ENCODE measurements at regions of chr2 and their contacts with region 1.

Region 1: GRCh38 chr2:86480105-86480504 is 38.9 kb downstream of the KDM3A start:
- DNase-seq: no peak
- H3K4me3 ChIP-seq: peak overlapping the region in 1 of 2 donors; percentile 22
- H3K27ac ChIP-seq: peak overlapping the region; percentile 21 to 76
- H3K4me1 ChIP-seq: peaks cover 30 to 60% of the 10 kb centered on the region in 2 donors
- H3K27me3 ChIP-seq: no peaks in the 10 kb centered on the region
- CTCF ChIP-seq: no peak

Region 2: GRCh38 chr2:86562922-86563649 is 83.0 kb after region 1 on chr2 and contains the start of gene CHMP3:
- intact Hi-C with region 1: loop called (anchors 5 kb)
- DNase-seq: peak; percentile 94 to 98
- H3K4me3 ChIP-seq: peak within 1 kb of the TSS; percentile 70 to 84
- H3K27ac ChIP-seq: peak within 1 kb of the TSS; percentile 94 to 95
- H3K4me1 ChIP-seq: peaks cover 0 to 14% of the 10 kb centered on the region in 2 donors
- H3K27me3 ChIP-seq: no peaks in the 10 kb centered on the region
- CTCF ChIP-seq: no peak
- total RNA-seq, gene CHMP3: 69.3 TPM

Measured in ascending aorta (tissue), 2 donors.